ENCODE measurements at regions of chr1 and their contacts with region 1.

Region 1: DNA sequence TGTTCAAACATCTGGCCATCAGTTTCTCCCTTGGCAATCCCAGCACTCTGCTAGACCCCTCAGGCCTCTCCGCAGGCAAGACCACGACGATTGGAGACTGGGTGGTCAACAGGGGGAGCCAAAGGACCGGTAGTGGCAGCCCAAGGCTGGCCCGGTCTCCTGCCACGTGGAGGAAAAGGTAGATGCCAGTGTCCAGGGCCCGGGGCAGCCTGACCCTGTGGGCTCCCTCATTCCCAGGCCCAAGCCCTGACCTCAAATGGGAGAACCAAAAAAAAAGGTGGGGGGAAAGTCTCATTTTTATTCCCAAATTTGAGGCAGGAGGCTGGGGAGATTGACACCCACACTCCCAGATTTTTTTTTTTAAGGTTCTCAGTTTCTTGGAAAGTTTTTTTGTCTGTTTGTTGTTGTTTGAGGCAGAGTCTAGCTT is 24.8 kb downstream of the S100A6 start:
- DNase-seq: peak in 1 of 2 experiments; percentile 93
- H3K4me3 ChIP-seq: no peak overlapping the region
- H3K27ac ChIP-seq: no peak overlapping the region
- H3K4me1 ChIP-seq: peaks cover 0 to 3% (median 1%) of the 10 kb centered on the region in 4 experiments; a peak in 3 of 7 replicates
- H3K27me3 ChIP-seq: peaks cover 0 to 5% (median 2%) of the 10 kb centered on the region in 4 experiments; a peak in 3 of 7 replicates
- CTCF ChIP-seq: peak; percentile 95 to 97 (median 95)
- EP300 ChIP-seq: no peak
- POLR2A ChIP-seq: no peak
- RAD21 ChIP-seq: peak; percentile 99 to 100

Region 2: DNA sequence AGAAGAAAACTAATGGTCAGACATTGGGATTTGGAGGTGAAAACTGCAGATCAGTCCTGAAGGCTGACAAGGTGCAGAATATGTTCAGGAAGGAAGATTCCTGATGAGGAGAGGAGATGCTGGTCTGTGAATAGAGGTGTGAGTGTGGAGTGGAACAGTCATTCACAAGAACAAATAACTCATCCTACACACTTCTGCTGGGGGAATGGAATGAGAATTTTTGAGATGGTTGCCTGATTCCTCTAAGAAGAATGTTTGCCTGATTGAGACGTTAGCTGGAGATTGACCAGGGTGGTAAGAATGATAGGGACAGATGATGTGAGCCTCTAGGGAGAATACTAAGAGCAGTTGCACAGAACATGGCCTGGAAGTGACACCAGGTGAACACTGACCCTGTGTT is 54.6 kb before region 1 on chr1:
- CTCF ChIA-PET with region 1: no interaction called
- POLR2A ChIA-PET with region 1: no interaction called
- DNase-seq: no peak
- H3K4me3 ChIP-seq: no peak overlapping the region
- H3K27ac ChIP-seq: no peak overlapping the region
- H3K4me1 ChIP-seq: no peaks in the 10 kb centered on the region
- H3K27me3 ChIP-seq: no peaks in the 10 kb centered on the region
- CTCF ChIP-seq: no peak
- EP300 ChIP-seq: no peak
- POLR2A ChIP-seq: no peak
- RAD21 ChIP-seq: no peak

Region 3: GRCh38 chr1:153526132-153526543 is 15.1 kb after region 1 on chr1:
- CTCF ChIA-PET with region 1: interaction called, 36 read pairs
- POLR2A ChIA-PET with region 1: interaction called, 3 read pairs
- DNase-seq: no peak
- H3K4me3 ChIP-seq: no peak overlapping the region
- H3K27ac ChIP-seq: no peak overlapping the region
- H3K4me1 ChIP-seq: peaks cover 3 to 5% (median 5%) of the 10 kb centered on the region in 4 experiments; a peak in 3 of 7 replicates
- H3K27me3 ChIP-seq: no peaks in the 10 kb centered on the region
- CTCF ChIP-seq: no peak
- EP300 ChIP-seq: no peak
- POLR2A ChIP-seq: no peak
- RAD21 ChIP-seq: no peak

Region 4: GRCh38 chr1:153553830-153554541 is 43.0 kb after region 1 on chr1:
- CTCF ChIA-PET with region 1: interaction called, 21 read pairs
- POLR2A ChIA-PET with region 1: no interaction called
- DNase-seq: no peak
- H3K4me3 ChIP-seq: no peak overlapping the region
- H3K27ac ChIP-seq: no peak overlapping the region
- H3K4me1 ChIP-seq: peaks cover 0 to 9% (median 0%) of the 10 kb centered on the region in 4 experiments; a peak in 1 of 7 replicates
- H3K27me3 ChIP-seq: no peaks in the 10 kb centered on the region; a peak in 2 of 7 replicates
- CTCF ChIP-seq: no peak
- EP300 ChIP-seq: no peak
- POLR2A ChIP-seq: no peak
- RAD21 ChIP-seq: no peak

Region 5: GRCh38 chr1:153566440-153567379 is 55.7 kb after region 1 on chr1:
- CTCF ChIA-PET with region 1: interaction called, 86 read pairs
- POLR2A ChIA-PET with region 1: interaction called, 4 read pairs
- DNase-seq: peak; percentile 76 to 90
- H3K4me3 ChIP-seq: no peak overlapping the region
- H3K27ac ChIP-seq: no peak overlapping the region
- H3K4me1 ChIP-seq: peaks cover 11 to 26% (median 20%) of the 10 kb centered on the region in 4 experiments
- H3K27me3 ChIP-seq: 0 out of 7 replicates have a peak, but pooled peaks cover 0 to 4% (median 0%) of the 10 kb centered on the region in 4 experiments
- CTCF ChIP-seq: no peak
- EP300 ChIP-seq: peak in 1 of 2 experiments; percentile 73; a peak in 1 of 3 replicates
- POLR2A ChIP-seq: peak in 1 of 2 experiments; percentile 24; a peak in 1 of 3 replicates
- RAD21 ChIP-seq: no peak; a peak in 2 of 4 replicates

Region 6: GRCh38 chr1:153577624-153578051 is 66.6 kb after region 1 on chr1:
- CTCF ChIA-PET with region 1: interaction called, 86 read pairs
- POLR2A ChIA-PET with region 1: no interaction called
- DNase-seq: no peak
- H3K4me3 ChIP-seq: no peak overlapping the region
- H3K27ac ChIP-seq: no peak overlapping the region
- H3K4me1 ChIP-seq: peaks cover 0 to 3% (median 0%) of the 10 kb centered on the region in 4 experiments; a peak in 2 of 7 replicates
- H3K27me3 ChIP-seq: no peaks in the 10 kb centered on the region
- CTCF ChIP-seq: no peak
- EP300 ChIP-seq: no peak
- POLR2A ChIP-seq: no peak
- RAD21 ChIP-seq: no peak